PC-9 (cell line): ENCODE measurements at regions of chr7 and their contacts with region 1.

Region 1: GRCh38 chr7:12715372-12716133 is 28.1 kb downstream of the ARL4A start:
- DNase-seq: peak; percentile 49 to 59
- H3K4me3 ChIP-seq: no peak overlapping the region
- H3K27ac ChIP-seq: no peak overlapping the region
- H3K4me1 ChIP-seq: peaks cover 15% of the 10 kb centered on the region
- H3K27me3 ChIP-seq: no peaks in the 10 kb centered on the region
- CTCF ChIP-seq: no peak

Region 2: DNA sequence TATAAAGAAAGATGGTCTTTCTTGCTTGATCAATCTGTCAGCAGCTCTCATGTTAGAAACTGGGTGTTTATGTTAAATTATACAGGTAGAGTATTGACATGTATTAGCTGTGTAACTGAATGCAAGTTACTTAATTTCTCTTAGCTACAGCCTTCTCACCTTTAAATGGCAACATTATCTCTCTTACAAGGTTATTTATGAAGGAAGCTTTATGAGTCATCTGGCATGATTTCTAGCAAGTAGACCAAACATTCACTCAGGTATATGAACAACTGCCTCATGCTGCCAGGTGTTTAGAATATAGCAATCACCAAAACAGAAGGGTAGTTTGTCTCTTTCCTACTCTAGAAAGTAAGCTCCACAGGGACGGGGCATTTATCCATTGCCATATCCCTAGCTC is 19.6 kb before region 1 on chr7:
- CTCF ChIA-PET with region 1: no interaction called
- POLR2A ChIA-PET with region 1: interaction called, 13 read pairs
- intact Hi-C with region 1: no loop called
- DNase-seq: no peak
- H3K4me3 ChIP-seq: no peak overlapping the region
- H3K27ac ChIP-seq: no peak overlapping the region
- H3K4me1 ChIP-seq: peaks cover 12% of the 10 kb centered on the region
- H3K27me3 ChIP-seq: no peaks in the 10 kb centered on the region
- CTCF ChIP-seq: no peak

Region 3: DNA sequence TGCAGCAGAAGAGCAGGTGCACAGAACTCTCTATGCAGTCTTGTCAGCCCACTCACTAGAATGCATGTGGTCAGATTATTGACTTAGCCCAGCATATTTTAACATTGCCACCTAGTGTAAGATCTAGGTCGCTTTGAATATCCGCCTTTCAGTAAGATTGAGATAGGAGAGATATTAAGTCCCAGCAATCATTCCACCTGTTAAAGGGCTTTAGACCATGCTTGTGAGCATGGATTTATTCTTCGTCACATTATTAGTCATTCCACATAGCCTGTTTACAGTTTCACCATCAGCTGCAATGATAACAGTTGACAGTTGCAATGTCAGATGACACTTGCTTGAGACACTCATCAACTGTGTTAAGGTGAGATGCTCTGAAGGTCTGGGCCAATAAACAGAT is 463.5 kb after region 1 on chr7:
- CTCF ChIA-PET with region 1: no interaction called
- POLR2A ChIA-PET with region 1: no interaction called
- intact Hi-C with region 1: no loop called
- DNase-seq: no peak
- H3K4me3 ChIP-seq: no peak overlapping the region
- H3K27ac ChIP-seq: no peak overlapping the region
- H3K4me1 ChIP-seq: no peaks in the 10 kb centered on the region
- H3K27me3 ChIP-seq: no peaks in the 10 kb centered on the region
- CTCF ChIP-seq: no peak